ENCODE measurements at regions of chr13 and their contacts with region 1.

Region 1: GRCh38 chr13:98445340-98446233 is 131.3 kb downstream of the STK24 start:
- DNase-seq: peak; percentile 85
- ATAC-seq: peak; percentile 88

Region 2: DNA sequence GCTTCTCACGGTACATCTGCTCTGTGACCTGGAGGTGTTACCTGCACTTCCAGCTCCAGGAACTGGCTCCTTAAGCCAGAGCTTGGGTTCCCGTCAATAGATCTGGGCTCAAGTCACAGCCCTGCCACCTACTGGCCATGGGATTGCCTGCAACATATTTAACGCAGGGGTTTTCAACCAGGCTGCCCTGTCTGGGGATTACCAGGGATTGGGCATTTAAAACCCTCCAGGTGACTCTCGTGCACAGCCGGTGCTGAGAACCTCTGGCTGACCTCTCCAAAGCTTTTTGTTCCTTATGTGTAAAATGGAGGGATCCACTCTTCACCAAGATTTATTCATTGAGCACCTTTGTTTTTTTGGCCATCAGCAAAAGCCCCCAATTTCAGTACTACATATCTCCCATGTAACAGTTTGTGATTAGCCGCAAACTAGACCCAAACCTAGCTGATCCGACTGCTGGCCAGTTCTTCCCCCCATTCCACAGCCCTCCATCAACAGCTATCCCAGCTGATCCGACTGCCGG is 207.9 kb after region 1 on chr13:
- intact Hi-C with region 1: loop called (anchors 2 kb)
- DNase-seq: peak; percentile 79
- ATAC-seq: peak; percentile 90

Region 3: GRCh38 chr13:98672944-98673545 is 227.5 kb after region 1 on chr13:
- intact Hi-C with region 1: loop called (anchors 5 kb)
- DNase-seq: peak; percentile 68
- ATAC-seq: peak; percentile 88

Region 4: GRCh38 chr13:99281811-99282263 is 836.2 kb after region 1 on chr13:
- intact Hi-C with region 1: no loop called
- DNase-seq: peak; percentile 80
- ATAC-seq: peak; percentile 65

Measured in Right ventricle myocardium superior (tissue), 1 donor.